Activated T-helper 1 cell treated with anti-CD3 and anti-CD28 coated beads, Interleukin-12 subunit alpha, Interleukin-12 subunit beta, Interleukin-2, Interleukin-4 antibody, amounts not matched to agents 30 ng/mL and 10 ng/mL and 1 ng/mL, durations not matched to agents 14 hours and 24 hours and 36 hours (primary cell): ENCODE measurements at regions of chr19 and their contacts with region 1.

Region 1: DNA sequence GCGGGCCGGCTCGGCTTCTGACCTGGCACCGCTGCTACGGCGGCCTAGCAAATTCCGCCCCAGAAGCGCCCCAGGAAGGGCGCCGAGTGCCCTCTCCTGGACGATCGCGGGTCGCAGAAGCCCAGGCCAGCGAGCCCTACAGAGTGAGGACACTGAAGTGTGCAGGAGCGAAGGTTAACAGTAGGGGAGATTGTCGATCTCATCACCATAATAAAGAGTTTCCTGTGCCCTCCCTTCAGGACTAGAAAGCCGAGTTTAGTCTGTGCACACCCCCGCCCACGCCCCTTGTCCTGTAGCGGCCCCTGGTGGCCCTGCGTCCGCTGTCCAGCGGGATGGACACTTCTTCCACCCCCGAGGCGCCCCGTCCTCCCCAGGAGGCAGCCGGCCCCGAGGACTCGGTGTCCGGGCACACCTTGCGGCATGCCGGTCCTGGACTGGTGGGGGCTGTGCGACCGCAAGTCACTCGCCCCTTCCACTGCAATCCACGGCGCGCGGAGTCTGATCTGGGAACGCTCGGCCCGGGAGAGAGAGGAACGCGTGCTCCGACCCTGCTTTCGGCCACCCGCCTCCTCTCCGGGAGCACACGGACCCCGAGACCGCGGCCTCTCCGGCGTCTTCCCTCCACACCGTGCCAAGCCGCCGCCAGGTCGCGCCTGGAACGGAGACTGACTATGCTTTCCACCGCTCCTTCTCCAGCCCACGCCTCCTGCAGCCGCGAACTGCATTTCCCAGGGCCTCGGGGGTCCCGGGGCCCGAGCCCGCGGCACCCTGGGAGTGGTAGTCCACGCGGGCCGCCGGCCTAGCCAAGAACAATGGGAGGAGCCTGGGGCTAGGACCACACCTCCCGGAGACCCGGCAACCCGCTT is 769 bp upstream of the KMT2B start:
- DNase-seq: peak; percentile 97
- H3K4me3 Mint-ChIP-seq: peak overlapping the region; percentile 99
- H3K27ac Mint-ChIP-seq: peak overlapping the region; percentile 98
- H3K4me1 Mint-ChIP-seq: peaks cover 50% of the 10 kb centered on the region
- H3K27me3 Mint-ChIP-seq: no peaks in the 10 kb centered on the region

Region 2: DNA sequence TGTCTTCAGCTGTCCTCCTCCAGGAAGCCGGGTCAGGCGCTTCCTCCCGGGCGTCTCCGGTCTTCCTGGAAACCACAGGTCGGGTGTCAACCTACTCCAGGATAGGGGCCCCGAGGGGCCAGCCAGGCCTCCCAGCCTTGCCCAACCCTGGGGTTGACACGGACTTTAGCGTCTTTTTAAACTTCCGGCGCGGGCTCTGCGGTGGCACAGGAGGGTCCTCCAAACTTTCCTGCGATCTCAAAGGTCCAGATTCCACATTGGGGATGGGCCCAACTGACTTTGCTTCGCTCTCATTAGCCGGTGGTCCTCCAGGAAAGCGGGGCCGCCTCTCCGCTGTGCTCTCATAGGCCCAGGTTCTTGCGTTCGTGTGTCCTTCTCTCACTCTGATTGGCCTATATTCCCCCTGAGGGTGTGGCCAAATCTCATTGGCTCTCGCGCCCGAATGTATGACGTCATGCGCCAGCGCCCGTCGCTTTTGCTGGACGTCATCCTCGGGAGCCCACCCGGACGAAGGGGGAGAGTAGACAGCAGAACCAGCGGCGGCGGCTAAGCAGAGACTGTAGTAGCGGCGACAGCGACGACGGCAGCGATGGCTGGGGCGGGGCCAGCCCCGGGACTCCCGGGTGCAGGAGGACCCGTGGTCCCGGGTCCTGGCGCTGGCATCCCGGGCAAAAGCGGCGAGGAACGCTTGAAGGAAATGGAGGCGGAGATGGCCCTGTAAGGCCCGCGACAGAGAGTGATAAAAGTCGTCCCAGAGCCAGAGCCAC is 88.3 kb before region 1 on chr19 and contains the start of gene RBM42:
- intact Hi-C with region 1: loop called (anchors 1 kb)
- DNase-seq: peak; percentile 96
- H3K4me3 Mint-ChIP-seq: peak within 1 kb of the TSS; percentile 100
- H3K27ac Mint-ChIP-seq: peak within 1 kb of the TSS; percentile 100
- H3K4me1 Mint-ChIP-seq: peaks cover 12% of the 10 kb centered on the region
- H3K27me3 Mint-ChIP-seq: no peaks in the 10 kb centered on the region
- total RNA-seq, gene RBM42: 105 and 118 TPM in 2 replicates

Region 3: GRCh38 chr19:35740423-35741202 is 23.6 kb after region 1 on chr19:
- intact Hi-C with region 1: loop called (anchors 1 kb)
- DNase-seq: peak; percentile 95
- H3K4me3 Mint-ChIP-seq: peak overlapping the region; percentile 93
- H3K27ac Mint-ChIP-seq: peak overlapping the region; percentile 93
- H3K4me1 Mint-ChIP-seq: peaks cover 23% of the 10 kb centered on the region
- H3K27me3 Mint-ChIP-seq: peaks cover 2% of the 10 kb centered on the region

Region 4: GRCh38 chr19:35775298-35776110 is 58.5 kb after region 1 on chr19 and contains the start of gene ARHGAP33:
- intact Hi-C with region 1: loop called (anchors 1 kb)
- DNase-seq: peak; percentile 99
- H3K4me3 Mint-ChIP-seq: peak within 1 kb of the TSS; percentile 85
- H3K27ac Mint-ChIP-seq: peak within 1 kb of the TSS; percentile 61
- H3K4me1 Mint-ChIP-seq: peaks cover 29% of the 10 kb centered on the region
- H3K27me3 Mint-ChIP-seq: no peaks in the 10 kb centered on the region
- total RNA-seq, gene ARHGAP33: 24.5 and 25.8 TPM in 2 replicates

Region 5: GRCh38 chr19:35931161-35931873 is 214.3 kb after region 1 on chr19:
- intact Hi-C with region 1: loop called (anchors 1 kb)
- DNase-seq: peak; percentile 100
- H3K4me3 Mint-ChIP-seq: peak overlapping the region; percentile 70
- H3K27ac Mint-ChIP-seq: peak overlapping the region; percentile 81
- H3K4me1 Mint-ChIP-seq: peaks cover 30% of the 10 kb centered on the region
- H3K27me3 Mint-ChIP-seq: no peaks in the 10 kb centered on the region